ENCODE measurements at regions of chr11 and their contacts with region 1.

Region 1: DNA sequence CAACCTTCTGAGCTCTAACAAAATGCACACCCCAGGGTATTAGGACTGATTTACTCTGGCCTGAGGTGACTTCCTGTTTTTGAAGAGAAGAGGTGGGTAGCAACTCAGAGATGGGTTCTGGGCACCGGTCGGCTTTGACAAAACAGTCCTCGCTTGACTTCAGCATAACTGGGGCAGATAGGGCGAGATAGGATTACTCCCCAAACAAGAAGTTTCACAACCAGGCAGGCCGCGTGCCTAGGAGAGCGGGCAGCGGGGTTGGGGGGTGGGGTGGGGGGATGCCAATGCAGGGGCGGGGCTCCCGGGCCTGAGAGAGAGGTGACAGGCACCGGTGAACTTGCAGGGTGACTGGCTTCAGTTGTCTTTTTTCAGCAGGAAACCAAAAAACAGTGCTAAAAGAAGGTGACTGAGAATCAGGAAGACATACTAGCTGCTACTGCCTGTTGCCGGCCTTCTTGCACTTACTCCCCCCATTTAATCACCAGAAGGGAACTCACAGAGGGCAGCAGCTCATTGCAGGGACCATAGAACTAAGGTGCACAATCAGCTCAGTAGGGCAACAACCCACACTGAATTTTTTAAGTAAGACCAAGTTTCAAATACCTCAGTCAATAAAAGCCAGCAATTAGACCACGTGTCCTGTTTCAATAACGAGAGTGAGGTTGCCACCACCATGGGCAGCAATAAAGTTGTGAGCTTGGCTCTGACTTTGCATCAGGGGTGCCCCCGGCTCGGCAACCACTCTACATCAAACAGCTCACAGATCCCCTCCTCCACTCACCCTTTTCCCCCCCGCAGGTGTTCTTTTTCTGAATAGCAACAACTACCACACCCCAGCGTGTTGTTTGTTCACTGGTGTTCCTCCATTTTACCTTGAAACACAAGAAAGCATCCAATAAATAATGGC is 37.2 kb upstream of the ETS1 start:
- DNase-seq: peak; percentile 54
- H3K4me3 Mint-ChIP-seq: peak overlapping the region; percentile 75
- H3K27ac Mint-ChIP-seq: peak overlapping the region; percentile 97
- H3K4me1 Mint-ChIP-seq: peaks cover 94% of the 10 kb centered on the region
- H3K27me3 Mint-ChIP-seq: no peaks in the 10 kb centered on the region

Region 2: GRCh38 chr11:128346804-128347203 is 277.7 kb before region 1 on chr11:
- intact Hi-C with region 1: no loop called
- DNase-seq: no peak
- H3K4me3 Mint-ChIP-seq: no peak overlapping the region
- H3K27ac Mint-ChIP-seq: peak overlapping the region; percentile 61
- H3K4me1 Mint-ChIP-seq: peaks cover 85% of the 10 kb centered on the region
- H3K27me3 Mint-ChIP-seq: no peaks in the 10 kb centered on the region

Region 3: DNA sequence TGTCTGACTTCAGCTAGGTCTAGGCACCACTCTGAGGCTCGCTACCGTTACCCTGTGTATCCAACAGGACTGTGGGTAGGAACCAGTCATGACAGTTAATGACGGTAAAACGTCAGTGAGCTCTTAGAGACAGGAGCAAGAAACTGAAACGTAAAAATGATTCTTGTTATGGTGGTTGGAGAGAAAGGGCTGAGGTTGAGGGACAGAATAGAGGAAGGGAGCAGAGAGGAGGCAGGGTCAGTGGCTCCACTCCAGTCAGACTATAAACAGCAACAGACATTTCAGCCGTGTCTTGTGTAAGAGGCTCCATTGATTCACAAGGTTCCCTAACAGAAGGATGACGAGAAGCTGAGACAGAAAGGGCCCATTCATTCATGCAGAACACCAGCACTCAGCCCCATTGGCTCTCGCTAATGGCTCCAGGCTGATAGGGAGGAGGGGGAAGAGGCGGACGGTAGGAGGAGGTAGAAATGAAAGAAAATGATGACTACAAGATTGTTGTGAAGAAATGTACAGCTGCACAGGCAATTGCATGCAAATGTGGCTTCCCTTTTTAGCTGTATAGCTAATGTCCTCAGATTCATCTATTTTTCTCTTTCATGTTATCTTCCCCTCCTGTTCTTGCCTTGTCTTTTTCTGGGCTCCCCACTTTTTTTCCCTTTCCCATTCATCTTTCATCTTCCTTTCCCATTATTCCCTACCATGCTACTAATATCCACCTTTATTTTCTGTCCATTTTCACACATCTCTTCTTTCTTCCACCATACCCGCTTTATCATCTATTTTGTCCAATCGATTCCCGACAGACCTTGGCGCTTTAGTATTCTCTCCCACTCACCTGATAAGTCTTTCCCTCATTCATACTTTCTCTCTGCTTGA is 71.5 kb before region 1 on chr11:
- intact Hi-C with region 1: loop called (anchors 1 kb)
- DNase-seq: no peak
- H3K4me3 Mint-ChIP-seq: peak overlapping the region; percentile 0
- H3K27ac Mint-ChIP-seq: peak overlapping the region; percentile 53
- H3K4me1 Mint-ChIP-seq: peaks cover 60% of the 10 kb centered on the region
- H3K27me3 Mint-ChIP-seq: no peaks in the 10 kb centered on the region

Region 4: DNA sequence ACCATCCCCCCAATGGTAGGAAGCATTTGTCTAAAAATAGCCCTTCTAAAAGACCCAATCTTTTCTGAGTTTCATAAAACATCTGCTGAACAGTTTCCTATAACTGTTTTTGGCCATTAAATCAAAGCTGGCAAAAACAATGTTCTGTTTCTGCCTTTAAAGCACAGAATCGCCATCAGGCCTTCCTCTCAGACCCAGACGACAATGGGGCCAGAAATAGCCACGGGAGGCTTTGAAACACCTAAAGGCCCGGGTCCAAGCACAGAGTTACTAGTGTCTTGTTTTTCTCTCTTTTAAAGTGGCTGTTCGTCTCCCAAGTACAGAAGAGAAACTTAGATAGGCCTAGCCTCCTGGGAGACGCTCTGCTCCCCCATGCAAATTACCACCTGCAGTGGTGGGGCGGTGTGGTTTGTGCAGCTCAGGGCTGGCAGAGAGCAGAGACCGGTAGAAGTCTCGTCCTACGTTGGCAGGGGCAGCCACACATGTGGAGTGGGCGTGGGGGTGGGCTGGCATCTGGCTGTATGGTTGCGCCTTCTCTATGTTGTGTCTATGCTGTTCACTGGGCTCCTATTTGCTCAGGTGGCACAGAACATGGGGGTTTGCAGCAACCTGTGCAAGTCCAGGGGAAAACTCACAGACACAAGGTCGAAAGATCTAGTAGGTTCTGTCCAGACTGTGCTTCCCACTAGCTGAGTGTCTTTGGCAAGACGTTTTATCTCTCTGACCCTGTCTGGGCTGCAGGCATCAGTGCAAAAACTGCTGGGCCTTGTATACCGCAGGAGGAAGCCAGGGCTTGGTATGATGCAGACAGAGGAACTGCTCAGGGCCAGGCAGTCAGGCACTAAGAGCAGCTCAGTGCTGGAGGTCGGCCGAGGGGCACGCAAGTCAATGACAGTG is 13.6 kb before region 1 on chr11:
- intact Hi-C with region 1: loop called (anchors 1 kb)
- DNase-seq: peak; percentile 33
- H3K4me3 Mint-ChIP-seq: peak overlapping the region; percentile 73
- H3K27ac Mint-ChIP-seq: peak overlapping the region; percentile 82
- H3K4me1 Mint-ChIP-seq: peaks cover 32% of the 10 kb centered on the region
- H3K27me3 Mint-ChIP-seq: peaks cover 1% of the 10 kb centered on the region

Region 5: GRCh38 chr11:128643661-128644317 is 19.3 kb after region 1 on chr11:
- intact Hi-C with region 1: no loop called
- DNase-seq: no peak
- H3K4me3 Mint-ChIP-seq: no peak overlapping the region
- H3K27ac Mint-ChIP-seq: no peak overlapping the region
- H3K4me1 Mint-ChIP-seq: no peaks in the 10 kb centered on the region
- H3K27me3 Mint-ChIP-seq: peaks cover 14% of the 10 kb centered on the region

Region 6: GRCh38 chr11:128669506-128670270 is 45.2 kb after region 1 on chr11:
- intact Hi-C with region 1: no loop called
- DNase-seq: no peak
- H3K4me3 Mint-ChIP-seq: no peak overlapping the region
- H3K27ac Mint-ChIP-seq: no peak overlapping the region
- H3K4me1 Mint-ChIP-seq: peaks cover 7% of the 10 kb centered on the region
- H3K27me3 Mint-ChIP-seq: peaks cover 36% of the 10 kb centered on the region

Region 7: GRCh38 chr11:129803533-129803932 is 1179.0 kb after region 1 on chr11:
- intact Hi-C with region 1: no loop called
- DNase-seq: no peak
- H3K4me3 Mint-ChIP-seq: no peak overlapping the region
- H3K27ac Mint-ChIP-seq: no peak overlapping the region
- H3K4me1 Mint-ChIP-seq: peaks cover 19% of the 10 kb centered on the region
- H3K27me3 Mint-ChIP-seq: peaks cover 15% of the 10 kb centered on the region

Measured in activated T-helper 1 cell treated with anti-CD3 and anti-CD28 coated beads, Interleukin-12 subunit alpha, Interleukin-12 subunit beta, Interleukin-2, Interleukin-4 antibody, amounts not matched to agents 30 ng/mL and 10 ng/mL and 1 ng/mL, durations not matched to agents 14 hours and 24 hours and 36 hours (primary cell).